ENCODE measurements at regions of chr5 and their contacts with region 1.

Region 1: GRCh38 chr5:14996997-14997396 is 125.4 kb upstream of the ANKH start:
- DNase-seq: no peak
- H3K4me3 Mint-ChIP-seq: no peak overlapping the region
- H3K27ac Mint-ChIP-seq: no peak overlapping the region
- H3K4me1 Mint-ChIP-seq: peaks cover 14% of the 10 kb centered on the region
- H3K27me3 Mint-ChIP-seq: no peaks in the 10 kb centered on the region

Region 2: DNA sequence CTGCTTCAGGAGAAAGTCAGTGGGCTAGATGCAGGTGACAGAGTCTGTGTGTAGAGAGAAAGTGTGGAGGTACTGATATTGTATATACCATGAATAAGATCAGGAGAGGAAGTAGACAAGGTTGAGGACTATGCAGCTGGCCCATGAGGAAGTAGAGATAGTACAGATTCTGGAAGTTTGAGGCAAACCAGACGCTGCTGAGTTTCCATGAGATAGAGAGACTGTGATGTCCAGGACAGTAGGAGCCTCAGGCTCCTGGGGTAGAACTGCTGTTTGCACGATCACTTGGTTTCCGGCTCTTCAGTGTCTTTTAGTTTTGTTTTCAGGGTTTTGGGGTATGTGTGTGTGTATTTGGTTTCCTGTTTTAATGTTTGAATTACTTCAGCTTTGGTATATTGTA is 401.8 kb before region 1 on chr5:
- CTCF ChIA-PET with region 1: no interaction called
- intact Hi-C with region 1: loop called (anchors 5 kb)
- DNase-seq: peak; percentile 51
- H3K4me3 Mint-ChIP-seq: peak overlapping the region; percentile 68
- H3K27ac Mint-ChIP-seq: peak overlapping the region; percentile 90
- H3K4me1 Mint-ChIP-seq: peaks cover 84% of the 10 kb centered on the region
- H3K27me3 Mint-ChIP-seq: no peaks in the 10 kb centered on the region

Region 3: GRCh38 chr5:14706615-14707021 is 290.4 kb before region 1 on chr5:
- CTCF ChIA-PET with region 1: interaction called, 3 read pairs
- intact Hi-C with region 1: loop called (anchors 2 kb)
- DNase-seq: peak; percentile 46
- H3K4me3 Mint-ChIP-seq: peak overlapping the region; percentile 18
- H3K27ac Mint-ChIP-seq: peak overlapping the region; percentile 94
- H3K4me1 Mint-ChIP-seq: peaks cover 75% of the 10 kb centered on the region
- H3K27me3 Mint-ChIP-seq: no peaks in the 10 kb centered on the region

Region 4: GRCh38 chr5:14946815-14947640 is 50.0 kb before region 1 on chr5:
- CTCF ChIA-PET with region 1: no interaction called
- intact Hi-C with region 1: loop called (anchors 2 kb)
- DNase-seq: peak; percentile 59
- H3K4me3 Mint-ChIP-seq: no peak overlapping the region
- H3K27ac Mint-ChIP-seq: peak overlapping the region; percentile 62
- H3K4me1 Mint-ChIP-seq: peaks cover 21% of the 10 kb centered on the region
- H3K27me3 Mint-ChIP-seq: no peaks in the 10 kb centered on the region

Region 5: GRCh38 chr5:15183522-15183921 is 186.5 kb after region 1 on chr5:
- CTCF ChIA-PET with region 1: no interaction called
- intact Hi-C with region 1: no loop called
- DNase-seq: no peak
- H3K4me3 Mint-ChIP-seq: no peak overlapping the region
- H3K27ac Mint-ChIP-seq: no peak overlapping the region
- H3K4me1 Mint-ChIP-seq: no peaks in the 10 kb centered on the region
- H3K27me3 Mint-ChIP-seq: no peaks in the 10 kb centered on the region